ENCODE measurements at regions of chr22 and their contacts with region 1.

Region 1: GRCh38 chr22:40950962-40951794 is at the start of gene RBX1:
- DNase-seq: peak; percentile 98
- H3K4me3 Mint-ChIP-seq: peak within 1 kb of the TSS; percentile 98
- H3K27ac Mint-ChIP-seq: peak within 1 kb of the TSS; percentile 99
- H3K4me1 Mint-ChIP-seq: peaks cover 8% of the 10 kb centered on the region
- H3K27me3 Mint-ChIP-seq: no peaks in the 10 kb centered on the region
- CTCF ChIP-seq: no peak
- total RNA-seq, gene RBX1: 46.7 and 71.3 TPM in 2 replicates

Region 2: DNA sequence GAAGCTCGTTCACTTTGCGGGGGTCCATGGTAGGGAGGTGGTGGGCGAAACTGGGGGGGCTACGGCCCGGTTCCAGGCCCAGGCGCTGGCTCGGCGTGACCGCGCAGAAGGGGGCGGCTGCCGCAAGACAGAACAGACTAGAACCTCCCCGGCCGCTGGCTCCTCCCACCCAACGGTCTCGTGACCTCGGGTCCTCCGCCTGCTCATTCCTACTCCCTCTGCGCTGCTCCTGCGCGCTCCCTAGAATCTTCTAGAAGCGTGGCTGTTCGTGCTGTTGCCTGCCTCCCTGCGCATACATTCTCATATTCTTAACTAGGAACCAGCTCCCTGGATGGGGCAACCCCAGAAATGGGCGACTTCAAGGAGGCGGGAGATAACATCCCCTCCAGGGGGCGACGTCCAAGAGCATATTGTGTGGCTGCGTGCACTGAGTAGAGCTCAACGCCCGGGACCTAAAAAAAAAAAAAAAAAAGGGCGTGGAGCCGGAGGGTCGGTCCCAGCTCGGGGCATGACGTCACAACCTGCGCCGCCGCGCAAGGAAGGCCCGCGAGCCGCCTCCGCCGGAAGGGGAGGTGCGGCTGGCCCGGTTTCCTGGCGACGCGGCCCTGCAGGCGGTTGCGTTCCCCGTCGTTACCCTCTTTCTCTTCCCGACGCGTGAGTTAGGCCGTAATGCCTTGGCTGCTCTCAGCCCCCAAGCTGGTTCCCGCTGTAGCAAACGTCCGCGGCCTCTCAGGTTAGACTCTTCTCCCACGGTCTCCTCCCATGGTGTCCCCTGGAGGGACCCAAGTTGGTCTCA is 94.5 kb before region 1 on chr22 and contains the starts of genes ST13 and XPNPEP3:
- CTCF ChIA-PET with region 1: no interaction called
- POLR2A ChIA-PET with region 1: interaction called, 12 read pairs
- intact Hi-C with region 1: no loop called
- DNase-seq: peak; percentile 96
- H3K4me3 Mint-ChIP-seq: peak within 1 kb of the TSS; percentile 97
- H3K27ac Mint-ChIP-seq: peak within 1 kb of the TSS; percentile 99
- H3K4me1 Mint-ChIP-seq: peaks cover 15% of the 10 kb centered on the region
- H3K27me3 Mint-ChIP-seq: no peaks in the 10 kb centered on the region
- CTCF ChIP-seq: no peak
- total RNA-seq, gene ST13: 191 and 231 TPM in 2 replicates
- total RNA-seq, gene XPNPEP3: 33.1 and 47.2 TPM in 2 replicates

Region 3: GRCh38 chr22:40939202-40939601 is 12.0 kb before region 1 on chr22:
- CTCF ChIA-PET with region 1: no interaction called
- POLR2A ChIA-PET with region 1: interaction called, 14 read pairs
- intact Hi-C with region 1: no loop called
- DNase-seq: no peak
- H3K4me3 Mint-ChIP-seq: no peak overlapping the region
- H3K27ac Mint-ChIP-seq: no peak overlapping the region
- H3K4me1 Mint-ChIP-seq: peaks cover 6% of the 10 kb centered on the region
- H3K27me3 Mint-ChIP-seq: no peaks in the 10 kb centered on the region
- CTCF ChIP-seq: no peak

Region 4: DNA sequence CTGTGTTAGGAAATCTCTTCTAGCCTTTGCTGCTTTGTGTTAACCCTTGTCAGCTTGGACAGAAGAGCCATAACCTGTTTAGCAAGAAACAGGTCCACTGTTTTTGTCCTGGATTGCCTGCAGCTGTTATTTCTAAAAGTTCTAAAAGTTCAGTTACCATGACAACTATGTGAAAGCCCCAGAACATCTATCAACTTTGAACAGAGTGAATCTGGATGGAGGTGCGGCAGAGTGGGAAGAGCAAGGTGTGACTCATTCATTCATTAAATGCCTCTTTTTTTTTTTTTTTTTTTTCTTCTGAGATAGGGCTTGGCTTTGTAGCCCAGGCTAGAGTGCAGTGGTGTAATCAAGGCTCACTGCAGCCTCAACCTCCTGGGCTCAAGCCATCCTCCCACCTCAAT is 50.5 kb after region 1 on chr22:
- CTCF ChIA-PET with region 1: no interaction called
- POLR2A ChIA-PET with region 1: interaction called, 14 read pairs
- intact Hi-C with region 1: no loop called
- DNase-seq: peak; percentile 61
- H3K4me3 Mint-ChIP-seq: no peak overlapping the region
- H3K27ac Mint-ChIP-seq: no peak overlapping the region
- H3K4me1 Mint-ChIP-seq: peaks cover 6% of the 10 kb centered on the region
- H3K27me3 Mint-ChIP-seq: no peaks in the 10 kb centered on the region
- CTCF ChIP-seq: no peak

Region 5: DNA sequence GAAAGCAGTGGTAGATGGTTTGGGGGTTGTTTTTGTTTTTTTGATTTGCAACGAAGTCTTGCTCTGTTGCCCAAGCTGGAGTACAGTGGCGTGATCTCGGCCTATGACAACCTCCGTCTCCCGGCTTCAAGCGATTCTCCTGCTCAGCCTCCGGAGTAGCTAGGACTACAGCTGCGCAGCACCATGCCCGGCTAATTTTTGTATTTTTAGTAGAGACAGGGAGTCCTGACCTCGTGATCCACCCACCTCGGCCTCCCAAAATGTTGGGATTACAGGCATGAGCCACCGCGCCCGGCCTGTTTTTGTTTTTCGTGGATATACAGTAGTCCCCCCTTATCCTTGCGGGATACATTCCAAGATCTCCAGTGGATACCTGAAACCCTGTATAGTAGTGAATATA is 147.9 kb after region 1 on chr22:
- CTCF ChIA-PET with region 1: interaction called, 4 read pairs
- POLR2A ChIA-PET with region 1: interaction called, 231 read pairs
- intact Hi-C with region 1: no loop called
- DNase-seq: no peak
- H3K4me3 Mint-ChIP-seq: no peak overlapping the region
- H3K27ac Mint-ChIP-seq: no peak overlapping the region
- H3K4me1 Mint-ChIP-seq: peaks cover 49% of the 10 kb centered on the region
- H3K27me3 Mint-ChIP-seq: no peaks in the 10 kb centered on the region
- CTCF ChIP-seq: no peak

Region 6: DNA sequence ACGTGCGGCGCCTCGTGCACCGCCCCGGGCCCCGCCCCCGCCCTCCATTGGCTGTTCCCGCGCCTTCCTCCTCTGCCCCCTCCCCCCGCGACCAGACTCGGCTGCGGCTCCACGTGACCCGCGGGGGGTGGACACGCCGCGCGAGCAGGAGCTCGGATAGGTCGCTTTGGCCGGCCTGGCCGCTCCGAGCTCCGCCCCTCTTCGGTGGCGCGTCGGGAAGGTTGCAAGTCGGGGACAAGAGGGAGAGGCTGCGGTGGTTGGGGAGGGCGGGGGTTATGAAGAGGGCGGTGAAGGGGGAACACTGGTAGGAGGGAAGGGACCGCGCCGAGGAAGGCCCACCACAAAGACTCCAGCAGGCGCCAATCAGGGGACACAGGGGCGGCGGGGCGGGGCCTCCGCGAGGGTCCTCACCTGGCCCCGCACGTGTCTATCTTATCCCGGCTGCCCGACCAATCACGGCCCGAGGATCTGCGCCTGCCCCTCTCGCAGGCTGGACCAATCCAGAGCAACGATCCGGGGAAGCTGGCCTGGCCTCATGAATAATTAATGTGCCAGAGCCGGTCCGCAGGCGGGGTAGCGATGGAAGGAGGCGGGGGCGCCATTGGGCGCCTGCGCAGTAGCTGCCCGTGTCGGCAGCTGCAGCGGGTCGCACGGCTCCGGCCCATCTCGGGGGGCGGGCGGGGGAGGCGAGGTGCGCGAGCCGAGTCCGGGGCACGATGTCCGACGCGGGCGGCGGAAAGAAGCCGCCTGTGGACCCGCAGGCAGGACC is 430.3 kb after region 1 on chr22 and contains the start of gene TEF:
- CTCF ChIA-PET with region 1: no interaction called
- POLR2A ChIA-PET with region 1: interaction called, 15 read pairs
- intact Hi-C with region 1: no loop called
- DNase-seq: peak; percentile 97
- H3K4me3 Mint-ChIP-seq: peak within 1 kb of the TSS; percentile 78
- H3K27ac Mint-ChIP-seq: peak within 1 kb of the TSS; percentile 95
- H3K4me1 Mint-ChIP-seq: peaks cover 6% of the 10 kb centered on the region
- H3K27me3 Mint-ChIP-seq: no peaks in the 10 kb centered on the region
- CTCF ChIP-seq: no peak
- total RNA-seq, gene TEF: 2.2 and 4.2 TPM in 2 replicates